ENCODE measurements at regions of chr2 and their contacts with region 1.

Region 1: GRCh38 chr2:203858176-203858575 is 9.4 kb upstream of the CTLA4 start:
- DNase-seq: peak; percentile 44
- H3K4me3 Mint-ChIP-seq: no peak overlapping the region
- H3K27ac Mint-ChIP-seq: peak overlapping the region; percentile 94
- H3K4me1 Mint-ChIP-seq: peaks cover 77% of the 10 kb centered on the region
- H3K27me3 Mint-ChIP-seq: no peaks in the 10 kb centered on the region

Region 2: DNA sequence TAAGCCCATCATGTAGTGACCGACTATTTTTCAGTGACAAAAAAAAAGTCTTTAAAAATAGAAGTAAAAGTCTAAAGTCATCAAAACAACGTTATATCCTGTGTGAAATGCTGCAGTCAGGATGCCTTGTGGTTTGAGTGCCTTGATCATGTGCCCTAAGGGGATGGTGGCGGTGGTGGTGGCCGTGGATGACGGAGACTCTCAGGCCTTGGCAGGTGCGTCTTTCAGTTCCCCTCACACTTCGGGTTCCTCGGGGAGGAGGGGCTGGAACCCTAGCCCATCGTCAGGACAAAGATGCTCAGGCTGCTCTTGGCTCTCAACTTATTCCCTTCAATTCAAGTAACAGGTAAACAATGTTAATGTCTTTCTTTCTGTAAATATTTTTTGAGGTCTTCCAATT is 151.8 kb before region 1 on chr2 and contains the start of gene CD28:
- CTCF ChIA-PET with region 1: no interaction called
- POLR2A ChIA-PET with region 1: interaction called, 12 read pairs
- DNase-seq: peak; percentile 95
- H3K4me3 Mint-ChIP-seq: peak within 1 kb of the TSS; percentile 90
- H3K27ac Mint-ChIP-seq: peak within 1 kb of the TSS; percentile 97
- H3K4me1 Mint-ChIP-seq: peaks cover 46% of the 10 kb centered on the region
- H3K27me3 Mint-ChIP-seq: no peaks in the 10 kb centered on the region
- total RNA-seq, gene CD28: 194 to 205 TPM

Region 3: DNA sequence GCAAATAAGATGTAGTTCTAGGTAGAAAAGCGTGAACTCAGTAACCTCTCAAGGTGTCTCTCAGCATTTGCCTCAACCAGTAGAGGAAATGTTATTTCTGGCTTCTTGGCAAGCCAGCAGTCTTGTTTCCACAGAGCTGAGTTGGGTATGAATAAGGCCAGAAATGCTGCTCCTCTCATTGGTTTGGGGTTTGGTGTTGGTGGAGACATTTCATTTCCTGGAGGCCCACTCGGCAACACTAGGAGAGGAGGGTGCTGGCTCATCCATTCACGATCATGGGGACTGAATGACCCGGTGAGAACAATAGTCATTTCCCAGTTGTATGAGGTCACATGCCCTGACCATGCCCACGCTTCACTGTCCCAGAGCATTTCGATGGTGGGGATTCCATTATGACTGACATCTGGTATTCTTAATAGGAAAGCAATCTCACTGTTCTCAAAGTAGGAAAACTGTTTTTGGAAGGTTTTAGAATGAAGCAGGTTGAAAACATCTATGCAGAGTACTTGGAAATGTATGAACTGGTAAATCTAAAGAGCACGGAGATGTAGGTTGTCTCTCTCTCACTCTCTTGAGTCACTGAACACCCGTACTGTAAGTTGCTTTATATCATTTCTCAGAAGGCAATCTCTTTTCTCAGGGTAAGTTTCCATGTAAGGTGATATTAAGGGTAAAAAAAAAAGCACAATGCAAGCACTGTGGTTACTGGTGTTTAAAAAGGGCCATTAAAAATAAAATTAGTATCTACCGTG is 27.7 kb before region 1 on chr2:
- CTCF ChIA-PET with region 1: interaction called, 4 read pairs
- POLR2A ChIA-PET with region 1: interaction called, 20 read pairs
- DNase-seq: peak; percentile 66
- H3K4me3 Mint-ChIP-seq: peak overlapping the region; percentile 61
- H3K27ac Mint-ChIP-seq: peak overlapping the region; percentile 93
- H3K4me1 Mint-ChIP-seq: peaks cover 29% of the 10 kb centered on the region
- H3K27me3 Mint-ChIP-seq: no peaks in the 10 kb centered on the region

Region 4: GRCh38 chr2:203878063-203878462 is 19.9 kb after region 1 on chr2:
- CTCF ChIA-PET with region 1: interaction called, 6 read pairs
- POLR2A ChIA-PET with region 1: interaction called, 298 read pairs
- DNase-seq: no peak
- H3K4me3 Mint-ChIP-seq: no peak overlapping the region
- H3K27ac Mint-ChIP-seq: peak overlapping the region; percentile 36
- H3K4me1 Mint-ChIP-seq: peaks cover 54% of the 10 kb centered on the region
- H3K27me3 Mint-ChIP-seq: no peaks in the 10 kb centered on the region

Region 5: GRCh38 chr2:203887677-203888076 is 29.5 kb after region 1 on chr2:
- CTCF ChIA-PET with region 1: interaction called, 9 read pairs
- POLR2A ChIA-PET with region 1: interaction called, 13 read pairs
- DNase-seq: no peak
- H3K4me3 Mint-ChIP-seq: no peak overlapping the region
- H3K27ac Mint-ChIP-seq: peak overlapping the region; percentile 83
- H3K4me1 Mint-ChIP-seq: peaks cover 80% of the 10 kb centered on the region
- H3K27me3 Mint-ChIP-seq: no peaks in the 10 kb centered on the region

Region 6: GRCh38 chr2:203893401-203893800 is 35.2 kb after region 1 on chr2:
- CTCF ChIA-PET with region 1: interaction called, 6 read pairs
- POLR2A ChIA-PET with region 1: interaction called, 13 read pairs
- DNase-seq: no peak
- H3K4me3 Mint-ChIP-seq: no peak overlapping the region
- H3K27ac Mint-ChIP-seq: peak overlapping the region; percentile 72
- H3K4me1 Mint-ChIP-seq: peaks cover 86% of the 10 kb centered on the region
- H3K27me3 Mint-ChIP-seq: no peaks in the 10 kb centered on the region

Region 7: DNA sequence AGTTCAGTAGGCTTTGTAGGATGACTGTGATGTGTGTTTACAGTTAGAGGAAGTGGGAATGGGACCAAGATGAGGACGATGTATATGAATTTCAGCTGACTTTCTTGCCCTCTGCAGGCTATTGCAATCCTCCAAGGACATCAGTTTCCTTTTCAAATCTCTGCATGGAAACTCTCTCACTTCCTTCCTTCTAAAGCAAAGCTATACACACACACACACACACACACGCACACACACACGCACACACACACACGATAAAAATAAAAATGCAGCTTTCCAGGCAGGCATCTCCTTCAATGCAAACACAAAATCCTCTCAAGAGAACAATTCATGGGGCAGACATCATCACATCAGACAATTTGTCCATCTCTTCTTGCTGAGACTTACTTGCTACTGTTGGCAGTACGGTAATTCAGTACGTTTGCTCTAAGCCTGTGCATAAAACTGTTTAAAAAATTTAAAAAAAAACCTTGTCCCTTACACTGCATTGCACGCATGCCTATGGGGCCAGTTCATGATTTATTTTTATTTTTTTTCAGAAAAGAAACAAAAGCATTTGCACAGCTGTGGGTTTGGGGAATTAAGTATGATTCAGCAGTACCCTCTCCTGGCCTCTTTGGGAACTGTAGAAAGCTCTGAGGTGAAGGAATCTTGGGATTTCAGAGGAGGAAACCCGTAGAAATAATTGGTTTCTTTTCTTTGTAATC is 51.2 kb after region 1 on chr2:
- CTCF ChIA-PET with region 1: interaction called, 11 read pairs
- POLR2A ChIA-PET with region 1: interaction called, 4 read pairs
- DNase-seq: no peak
- H3K4me3 Mint-ChIP-seq: peak overlapping the region; percentile 38
- H3K27ac Mint-ChIP-seq: peak overlapping the region; percentile 69
- H3K4me1 Mint-ChIP-seq: peaks cover 33% of the 10 kb centered on the region
- H3K27me3 Mint-ChIP-seq: peaks cover 3% of the 10 kb centered on the region